Heart right ventricle (tissue), 16 donors: ENCODE measurements at regions of chr10 and their contacts with region 1.

Region 1: GRCh38 chr10:97490592-97490991 is 7.6 kb downstream of the MMS19 start:
- DNase-seq: peak in 1 of 2 donors; percentile 54
- ATAC-seq: peak; percentile 78 to 92 (median 87)
- H3K4me3 ChIP-seq: no peak overlapping the region
- H3K27ac ChIP-seq: peak overlapping the region in 9 of 10 donors; percentile 37 to 88 (median 75)
- H3K4me1 ChIP-seq: peaks cover 5 to 83% (median 53%) of the 10 kb centered on the region in 9 donors
- H3K27me3 ChIP-seq: no peaks in the 10 kb centered on the region
- CTCF ChIP-seq: no peak

Region 2: GRCh38 chr10:96794866-96795733 is 695.5 kb before region 1 on chr10:
- intact Hi-C with region 1: loop called in 1 of 10 experiments (anchors 5 kb)
- DNase-seq: no peak
- ATAC-seq: no peak
- H3K4me3 ChIP-seq: no peak overlapping the region
- H3K27ac ChIP-seq: no peak overlapping the region
- H3K4me1 ChIP-seq: no peaks in the 10 kb centered on the region
- H3K27me3 ChIP-seq: peaks cover 0 to 12% (median 0%) of the 10 kb centered on the region in 7 donors
- CTCF ChIP-seq: no peak